ENCODE measurements at regions of chr12 and their contacts with region 1.

Region 1: DNA sequence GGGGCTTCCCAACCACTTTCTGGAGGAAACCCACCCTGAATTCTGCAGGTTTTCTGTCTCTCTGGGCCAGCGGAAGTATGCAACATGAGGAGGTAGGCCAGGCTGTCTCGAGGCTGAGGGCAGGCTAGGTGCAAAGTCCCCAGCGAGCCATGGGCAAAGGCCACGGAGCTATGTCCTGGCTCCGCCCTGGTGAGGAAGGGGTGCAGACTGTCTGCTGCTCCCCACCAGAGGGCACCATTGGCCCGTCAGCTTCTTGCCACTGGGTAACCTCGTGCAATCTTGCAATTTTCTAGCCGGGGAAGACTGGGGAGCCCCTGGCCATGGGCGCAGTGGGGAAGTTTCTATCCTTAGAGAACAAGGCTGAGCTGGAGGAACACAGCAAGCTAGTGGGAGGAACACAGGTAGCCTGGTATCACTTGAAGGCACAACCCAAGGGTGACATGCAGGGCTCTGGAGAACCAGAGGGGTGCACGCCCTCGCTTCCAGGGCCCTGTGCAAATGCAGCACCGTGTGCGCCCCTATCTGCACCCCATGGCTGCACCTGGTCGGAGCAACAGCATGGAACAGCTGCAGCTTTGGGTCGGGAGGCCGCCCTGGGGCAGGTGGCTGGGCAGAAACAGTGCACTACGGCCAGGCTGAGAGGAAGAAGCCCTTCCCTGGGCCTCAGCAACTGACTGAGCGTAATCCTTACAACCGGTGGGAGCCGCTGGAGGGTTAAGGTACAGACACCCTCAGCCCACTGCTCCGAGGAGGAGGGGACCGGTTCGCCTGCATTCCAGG is 27.6 kb upstream of the RPLP0 start:
- DNase-seq: peak; percentile 91

Region 2: DNA sequence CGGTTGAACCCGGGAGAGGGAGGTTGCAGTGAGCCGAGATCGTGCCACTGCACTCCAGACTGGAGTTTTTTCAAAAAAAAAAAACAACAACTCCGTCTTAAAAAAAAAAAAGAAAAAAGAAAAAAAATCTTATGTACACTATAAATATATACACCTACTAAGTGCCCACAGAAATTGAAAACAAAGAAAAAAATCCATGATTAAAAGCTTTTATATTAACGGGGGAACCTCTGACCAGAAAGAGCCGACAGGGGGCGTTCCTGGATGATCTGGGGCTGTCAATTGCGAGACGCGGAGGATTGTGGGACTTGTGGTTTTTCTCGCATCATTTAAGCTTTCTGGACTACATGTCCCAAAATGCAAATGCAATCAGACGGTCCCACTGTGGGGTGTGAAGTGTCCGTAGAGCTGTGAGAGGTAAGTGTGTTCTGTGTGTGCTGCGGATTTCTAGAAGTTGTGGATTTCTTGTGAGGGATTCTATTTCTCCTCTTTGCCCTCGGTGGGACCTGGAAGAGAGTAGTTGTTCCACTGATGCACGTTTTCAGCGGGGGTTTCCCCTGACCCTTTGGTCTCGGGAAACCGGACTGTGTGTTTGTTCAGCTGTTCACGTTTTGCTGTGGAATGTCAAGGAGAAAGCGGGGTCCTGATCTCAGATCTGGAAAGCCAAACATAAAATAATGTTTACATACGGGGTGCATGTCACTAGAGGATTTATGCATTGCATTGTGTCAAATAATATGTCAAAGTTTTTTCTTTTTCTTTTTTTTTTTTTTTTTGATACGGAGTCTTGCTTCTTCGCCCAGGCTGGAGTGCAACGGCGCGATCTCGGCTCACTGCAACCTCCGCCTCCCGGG is 73.7 kb after region 1 on chr12 and contains the start of gene SIRT4:
- in situ Hi-C with region 1: loop called (anchors 10 kb)
- DNase-seq: peak; percentile 98